ENCODE measurements at regions of chr6 and their contacts with region 1.

Region 1: GRCh38 chr6:131949909-131950766 is 1.0 kb downstream of the CCN2 start:
- DNase-seq: peak in 1 of 2 experiments; percentile 81
- H3K4me3 ChIP-seq: peak overlapping the region; percentile 72 to 98 (median 90)
- H3K27ac ChIP-seq: peak overlapping the region; percentile 84; the same call in 1 of the 2 replicates
- H3K4me1 ChIP-seq: peaks cover 15 to 33% (median 21%) of the 10 kb centered on the region in 4 experiments
- H3K27me3 ChIP-seq: no peaks in the 10 kb centered on the region
- CTCF ChIP-seq: peak; percentile 68 to 80 (median 71)
- EP300 ChIP-seq: no peak
- POLR2A ChIP-seq: peak; percentile 17 to 62
- RAD21 ChIP-seq: peak; percentile 56 to 58

Region 2: DNA sequence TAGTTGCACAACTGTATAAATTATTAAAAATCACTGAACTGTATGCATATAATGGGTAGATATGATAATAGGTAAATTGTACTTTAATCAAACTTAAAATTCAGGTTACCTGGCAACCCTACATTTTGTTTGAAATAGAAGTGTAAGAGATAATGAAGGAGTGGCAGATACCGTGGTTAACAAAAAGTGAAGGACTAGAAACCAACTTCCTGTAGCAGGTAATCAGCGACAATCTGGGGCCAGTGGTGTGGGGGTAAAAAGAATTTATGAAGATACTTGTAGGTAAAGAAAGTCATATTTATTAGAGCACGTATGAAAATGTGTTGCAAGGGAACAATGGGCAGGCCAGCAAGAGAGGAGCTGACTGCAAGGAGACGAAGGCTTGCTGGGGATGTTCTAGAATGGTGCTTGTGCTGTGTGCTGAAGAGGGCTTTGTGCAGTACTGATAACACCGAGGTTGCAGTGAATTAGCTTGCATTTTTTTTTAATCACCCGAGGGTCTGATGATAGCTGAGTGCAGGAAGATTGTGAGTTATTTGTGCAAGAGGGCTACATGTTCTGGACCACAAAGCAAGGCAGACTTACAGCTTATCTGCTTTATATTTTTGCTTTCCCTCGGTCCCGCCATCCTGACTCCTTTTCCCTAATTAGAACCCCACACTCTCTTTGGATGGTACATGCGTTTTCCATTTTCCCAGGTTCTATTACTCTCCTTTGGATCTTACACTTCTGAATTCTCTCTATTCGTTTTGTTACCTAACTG is 146.9 kb before region 1 on chr6:
- CTCF ChIA-PET with region 1: no interaction called
- POLR2A ChIA-PET with region 1: no interaction called
- DNase-seq: no peak
- H3K4me3 ChIP-seq: no peak overlapping the region
- H3K27ac ChIP-seq: no peak overlapping the region
- H3K4me1 ChIP-seq: peaks cover 0 to 3% (median 0%) of the 10 kb centered on the region in 4 experiments; a peak in 1 of 7 replicates
- H3K27me3 ChIP-seq: no peaks in the 10 kb centered on the region; a peak in 1 of 7 replicates
- CTCF ChIP-seq: no peak
- EP300 ChIP-seq: no peak
- POLR2A ChIP-seq: no peak
- RAD21 ChIP-seq: no peak

Region 3: GRCh38 chr6:131923356-131923755 is 26.8 kb before region 1 on chr6:
- CTCF ChIA-PET with region 1: interaction called, 36 read pairs
- POLR2A ChIA-PET with region 1: interaction called, 216 read pairs
- DNase-seq: peak in 1 of 2 experiments; percentile 81
- H3K4me3 ChIP-seq: no peak overlapping the region
- H3K27ac ChIP-seq: no peak overlapping the region
- H3K4me1 ChIP-seq: no peaks in the 10 kb centered on the region
- H3K27me3 ChIP-seq: no peaks in the 10 kb centered on the region
- CTCF ChIP-seq: peak; percentile 83 to 95 (median 88)
- EP300 ChIP-seq: no peak
- POLR2A ChIP-seq: no peak
- RAD21 ChIP-seq: peak; percentile 84 to 89

Region 4: GRCh38 chr6:131937703-131938631 is 12.2 kb before region 1 on chr6:
- CTCF ChIA-PET with region 1: interaction called, 6 read pairs
- POLR2A ChIA-PET with region 1: interaction called, 216 read pairs
- DNase-seq: no peak
- H3K4me3 ChIP-seq: peak overlapping the region in 1 of 4 experiments; percentile 0; a peak in 1 of 8 replicates
- H3K27ac ChIP-seq: no peak overlapping the region
- H3K4me1 ChIP-seq: peaks cover 1 to 10% (median 6%) of the 10 kb centered on the region in 4 experiments; a peak in 4 of 7 replicates
- H3K27me3 ChIP-seq: no peaks in the 10 kb centered on the region
- CTCF ChIP-seq: no peak
- EP300 ChIP-seq: no peak
- POLR2A ChIP-seq: no peak
- RAD21 ChIP-seq: no peak

Region 5: GRCh38 chr6:131966443-131966842 is 16.3 kb after region 1 on chr6:
- CTCF ChIA-PET with region 1: interaction called, 3 read pairs
- POLR2A ChIA-PET with region 1: interaction called, 70 read pairs
- DNase-seq: no peak
- H3K4me3 ChIP-seq: no peak overlapping the region
- H3K27ac ChIP-seq: no peak overlapping the region
- H3K4me1 ChIP-seq: no peaks in the 10 kb centered on the region
- H3K27me3 ChIP-seq: peaks cover 0 to 1% (median 0%) of the 10 kb centered on the region in 4 experiments; a peak in 1 of 7 replicates
- CTCF ChIP-seq: no peak
- EP300 ChIP-seq: no peak
- POLR2A ChIP-seq: no peak
- RAD21 ChIP-seq: no peak

Region 6: GRCh38 chr6:131979515-131980337 is 29.6 kb after region 1 on chr6:
- CTCF ChIA-PET with region 1: no interaction called
- POLR2A ChIA-PET with region 1: interaction called, 20 read pairs
- DNase-seq: no peak
- H3K4me3 ChIP-seq: no peak overlapping the region
- H3K27ac ChIP-seq: no peak overlapping the region
- H3K4me1 ChIP-seq: no peaks in the 10 kb centered on the region
- H3K27me3 ChIP-seq: no peaks in the 10 kb centered on the region
- CTCF ChIP-seq: no peak
- EP300 ChIP-seq: no peak
- POLR2A ChIP-seq: no peak
- RAD21 ChIP-seq: no peak

Region 7: DNA sequence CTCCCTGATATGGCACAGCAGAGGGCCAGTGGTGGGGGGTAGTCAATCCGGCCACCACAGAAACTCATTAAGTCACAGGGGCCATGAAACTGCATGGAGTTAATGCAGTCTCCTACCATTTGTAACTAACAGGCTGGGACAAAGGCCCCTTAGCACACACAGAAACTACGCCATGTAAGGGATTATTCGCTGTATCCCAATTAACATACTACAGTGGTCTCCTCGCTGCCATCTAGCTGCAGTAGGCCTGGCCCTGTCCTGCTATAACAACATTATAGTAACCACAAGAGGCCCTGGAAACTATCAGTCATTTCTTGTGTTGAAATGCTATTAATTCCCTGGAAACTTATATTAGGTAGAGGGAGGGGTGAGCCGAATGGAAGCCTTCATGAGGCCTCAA is 73.4 kb after region 1 on chr6:
- CTCF ChIA-PET with region 1: no interaction called
- POLR2A ChIA-PET with region 1: interaction called, 63 read pairs
- DNase-seq: no peak
- H3K4me3 ChIP-seq: no peak overlapping the region
- H3K27ac ChIP-seq: no peak overlapping the region
- H3K4me1 ChIP-seq: peaks cover 2 to 13% (median 7%) of the 10 kb centered on the region in 4 experiments; a peak in 3 of 7 replicates
- H3K27me3 ChIP-seq: no peaks in the 10 kb centered on the region
- CTCF ChIP-seq: peak; percentile 24 to 66 (median 49)
- EP300 ChIP-seq: no peak
- POLR2A ChIP-seq: no peak
- RAD21 ChIP-seq: peak in 1 of 2 experiments; percentile 42; a peak in 2 of 4 replicates

Region 8: GRCh38 chr6:132131758-132132157 is 181.6 kb after region 1 on chr6:
- CTCF ChIA-PET with region 1: interaction called, 4 read pairs
- POLR2A ChIA-PET with region 1: interaction called, 12 read pairs
- DNase-seq: no peak
- H3K4me3 ChIP-seq: no peak overlapping the region
- H3K27ac ChIP-seq: no peak overlapping the region
- H3K4me1 ChIP-seq: peaks cover 1 to 14% (median 12%) of the 10 kb centered on the region in 4 experiments
- H3K27me3 ChIP-seq: no peaks in the 10 kb centered on the region
- CTCF ChIP-seq: no peak
- EP300 ChIP-seq: no peak
- POLR2A ChIP-seq: no peak
- RAD21 ChIP-seq: no peak

Measured in H1 (cell line).